CD4-positive, alpha-beta T cell (primary cell): ENCODE measurements at regions of chr14 and their contacts with region 1.

Region 1: DNA sequence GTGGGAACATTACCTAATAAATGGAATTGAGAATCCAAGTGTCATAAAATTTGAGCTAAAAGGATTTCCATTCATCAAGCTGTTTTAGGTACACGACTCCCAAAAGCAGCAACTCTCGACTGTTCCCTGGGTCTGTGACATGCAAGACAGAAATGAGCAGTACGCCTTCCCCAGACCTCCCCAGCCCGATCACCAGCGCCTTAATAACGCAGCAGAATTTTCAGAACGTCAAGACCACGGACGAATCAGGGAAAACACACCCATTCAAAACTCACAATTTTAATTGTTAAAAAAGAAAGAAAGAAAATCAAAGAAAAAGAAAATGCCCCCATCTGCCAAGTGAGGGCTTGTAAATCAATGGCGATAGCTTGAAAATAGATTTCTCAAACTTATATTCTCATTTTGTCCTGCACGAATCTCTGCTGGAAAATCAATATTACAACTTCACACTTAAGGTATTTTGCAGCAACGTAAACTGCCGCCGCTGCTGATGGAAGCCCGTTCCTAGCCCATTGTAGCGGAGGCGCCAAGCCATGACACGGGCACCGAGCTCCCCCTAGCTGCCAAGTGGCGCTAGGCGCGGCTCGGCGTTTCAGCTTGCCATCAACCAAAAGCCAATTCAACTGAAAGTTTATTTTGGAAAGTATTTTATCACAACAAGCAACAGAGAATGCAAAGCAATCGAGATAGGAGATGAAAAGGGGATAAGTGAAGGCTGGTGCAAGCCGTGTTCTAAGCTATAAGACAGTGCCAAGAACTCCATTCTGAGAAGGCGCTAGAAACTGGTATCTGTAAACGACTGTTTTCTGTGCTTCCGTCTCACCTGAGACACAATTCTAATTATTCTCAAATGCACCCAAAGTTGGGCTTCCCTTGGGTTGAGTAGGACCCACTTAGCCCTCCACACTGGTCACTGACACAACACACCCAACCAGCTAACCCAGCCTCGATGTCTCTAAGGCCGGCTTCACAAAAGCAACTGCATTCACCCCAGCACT is 5.5 kb downstream of the BCL11B start:
- DNase-seq: peak; percentile 83 to 94 (median 90)
- ATAC-seq: peak; percentile 22
- H3K4me3 ChIP-seq: peak overlapping the region; percentile 97
- H3K4me3 Mint-ChIP-seq: peak overlapping the region; percentile 100
- H3K27ac ChIP-seq: peak overlapping the region; percentile 95 to 97
- H3K27ac Mint-ChIP-seq: peak overlapping the region; percentile 99
- H3K4me1 ChIP-seq: peaks cover 53% of the 10 kb centered on the region
- H3K4me1 Mint-ChIP-seq: peaks cover 63% of the 10 kb centered on the region
- H3K27me3 ChIP-seq: no peaks in the 10 kb centered on the region
- H3K27me3 Mint-ChIP-seq: peaks cover 5% of the 10 kb centered on the region
- CTCF ChIP-seq: peak; percentile 99

Region 2: DNA sequence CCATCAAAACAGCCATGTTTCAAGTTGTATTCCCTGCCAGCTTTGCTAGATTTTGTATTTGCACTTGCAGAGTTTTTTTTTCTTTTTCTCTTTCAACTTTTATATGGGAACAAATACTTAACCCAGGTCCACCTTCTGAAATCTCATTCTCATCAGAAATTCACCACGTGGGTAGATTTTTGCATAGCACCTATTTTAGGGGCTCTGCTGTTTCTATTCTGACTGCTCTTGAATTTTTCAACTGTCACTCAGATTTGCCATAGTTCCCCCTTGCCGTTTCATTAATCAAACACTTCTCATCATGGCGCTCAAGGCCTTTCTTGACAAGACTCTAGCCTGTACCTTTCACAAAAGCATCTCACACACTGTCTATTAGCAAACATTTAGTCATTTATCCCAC is 1702.1 kb before region 1 on chr14:
- CTCF ChIA-PET with region 1: no interaction called
- POLR2A ChIA-PET with region 1: no interaction called
- intact Hi-C with region 1: no loop called
- DNase-seq: no peak
- ATAC-seq: no peak
- H3K4me3 ChIP-seq: no peak overlapping the region
- H3K4me3 Mint-ChIP-seq: no peak overlapping the region
- H3K27ac ChIP-seq: no peak overlapping the region
- H3K27ac Mint-ChIP-seq: no peak overlapping the region
- H3K4me1 ChIP-seq: no peaks in the 10 kb centered on the region
- H3K4me1 Mint-ChIP-seq: no peaks in the 10 kb centered on the region
- H3K27me3 ChIP-seq: no peaks in the 10 kb centered on the region
- H3K27me3 Mint-ChIP-seq: no peaks in the 10 kb centered on the region
- CTCF ChIP-seq: no peak

Region 3: GRCh38 chr14:97978341-97978740 is 1288.1 kb before region 1 on chr14:
- CTCF ChIA-PET with region 1: interaction called, 26 read pairs
- POLR2A ChIA-PET with region 1: interaction called, 70 read pairs
- intact Hi-C with region 1: loop called in 1 of 2 experiments (anchors 2 kb)
- DNase-seq: peak; percentile 59 to 89 (median 76)
- ATAC-seq: peak; percentile 72
- H3K4me3 ChIP-seq: peak overlapping the region; percentile 76
- H3K4me3 Mint-ChIP-seq: peak overlapping the region; percentile 89
- H3K27ac ChIP-seq: peak overlapping the region; percentile 74 to 82
- H3K27ac Mint-ChIP-seq: peak overlapping the region; percentile 94
- H3K4me1 ChIP-seq: peaks cover 48% of the 10 kb centered on the region
- H3K4me1 Mint-ChIP-seq: peaks cover 84% of the 10 kb centered on the region
- H3K27me3 ChIP-seq: no peaks in the 10 kb centered on the region
- H3K27me3 Mint-ChIP-seq: no peaks in the 10 kb centered on the region
- CTCF ChIP-seq: peak; percentile 69

Region 4: GRCh38 chr14:98189062-98189461 is 1077.4 kb before region 1 on chr14:
- CTCF ChIA-PET with region 1: interaction called, 3 read pairs
- POLR2A ChIA-PET with region 1: interaction called, 271 read pairs
- intact Hi-C with region 1: loop called in 1 of 2 experiments (anchors 5 kb)
- DNase-seq: peak in 5 of 14 experiments; percentile 51 to 85 (median 55)
- ATAC-seq: peak; percentile 31
- H3K4me3 ChIP-seq: peak overlapping the region; percentile 24
- H3K4me3 Mint-ChIP-seq: peak overlapping the region; percentile 80
- H3K27ac ChIP-seq: peak overlapping the region; percentile 76 to 87
- H3K27ac Mint-ChIP-seq: peak overlapping the region; percentile 93
- H3K4me1 ChIP-seq: peaks cover 92% of the 10 kb centered on the region
- H3K4me1 Mint-ChIP-seq: peaks cover 100% of the 10 kb centered on the region
- H3K27me3 ChIP-seq: no peaks in the 10 kb centered on the region
- H3K27me3 Mint-ChIP-seq: no peaks in the 10 kb centered on the region
- CTCF ChIP-seq: no peak

Region 5: DNA sequence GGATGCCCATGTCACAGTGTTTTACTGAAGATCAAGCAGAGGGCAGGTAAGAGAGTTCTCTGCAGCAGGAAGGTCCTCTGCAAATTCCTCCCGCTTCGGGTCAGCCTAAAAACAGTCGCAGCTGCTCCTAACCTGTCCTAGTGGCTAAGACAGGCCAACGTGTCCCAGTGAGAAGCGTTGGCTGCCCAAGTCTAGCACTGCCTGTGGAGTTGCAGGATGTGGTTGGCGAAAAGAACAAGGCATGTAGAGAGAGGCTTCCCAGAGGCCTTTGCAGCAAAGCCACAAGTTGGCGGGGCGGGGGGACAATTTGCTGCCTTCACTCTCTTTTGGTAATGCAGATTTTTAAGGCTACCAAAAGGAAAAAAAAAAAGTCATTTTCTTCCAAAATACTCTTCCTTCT is 334.6 kb before region 1 on chr14:
- CTCF ChIA-PET with region 1: interaction called, 4 read pairs
- POLR2A ChIA-PET with region 1: interaction called, 5 read pairs
- intact Hi-C with region 1: loop called (anchors 5 kb)
- DNase-seq: peak; percentile 56 to 93 (median 79)
- ATAC-seq: peak; percentile 95
- H3K4me3 ChIP-seq: peak overlapping the region; percentile 36
- H3K4me3 Mint-ChIP-seq: peak overlapping the region; percentile 67
- H3K27ac ChIP-seq: peak overlapping the region; percentile 50 to 52
- H3K27ac Mint-ChIP-seq: peak overlapping the region; percentile 87
- H3K4me1 ChIP-seq: peaks cover 80% of the 10 kb centered on the region
- H3K4me1 Mint-ChIP-seq: peaks cover 98% of the 10 kb centered on the region
- H3K27me3 ChIP-seq: no peaks in the 10 kb centered on the region
- H3K27me3 Mint-ChIP-seq: no peaks in the 10 kb centered on the region
- CTCF ChIP-seq: no peak

Region 6: DNA sequence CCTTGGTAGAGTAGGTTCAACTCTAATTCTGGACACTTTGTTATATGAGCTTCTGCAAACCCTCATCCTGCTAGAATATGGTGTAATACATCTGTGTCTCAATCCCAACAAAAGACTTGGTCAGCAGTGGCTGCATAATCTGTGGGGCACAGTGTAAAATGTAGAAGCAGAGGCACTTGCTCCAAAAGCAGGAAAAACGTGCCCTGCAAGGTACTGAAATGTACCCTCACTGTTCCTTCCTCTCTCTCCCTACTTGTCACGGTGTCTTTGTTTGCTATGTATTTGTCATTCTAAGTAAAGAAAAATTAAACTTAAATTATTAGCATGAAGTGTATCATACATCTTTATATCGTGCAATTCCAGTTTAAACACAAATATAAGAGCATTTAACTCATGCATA is 262.3 kb before region 1 on chr14:
- CTCF ChIA-PET with region 1: no interaction called
- POLR2A ChIA-PET with region 1: no interaction called
- intact Hi-C with region 1: no loop called
- DNase-seq: no peak
- ATAC-seq: no peak
- H3K4me3 ChIP-seq: no peak overlapping the region
- H3K4me3 Mint-ChIP-seq: no peak overlapping the region
- H3K27ac ChIP-seq: no peak overlapping the region
- H3K27ac Mint-ChIP-seq: no peak overlapping the region
- H3K4me1 ChIP-seq: no peaks in the 10 kb centered on the region
- H3K4me1 Mint-ChIP-seq: no peaks in the 10 kb centered on the region
- H3K27me3 ChIP-seq: no peaks in the 10 kb centered on the region
- H3K27me3 Mint-ChIP-seq: no peaks in the 10 kb centered on the region
- CTCF ChIP-seq: no peak

Region 7: GRCh38 chr14:99215277-99215676 is 51.2 kb before region 1 on chr14:
- CTCF ChIA-PET with region 1: interaction called, 23 read pairs
- POLR2A ChIA-PET with region 1: interaction called, 4,389 read pairs
- intact Hi-C with region 1: no loop called
- DNase-seq: no peak
- ATAC-seq: no peak
- H3K4me3 ChIP-seq: peak overlapping the region; percentile 39
- H3K4me3 Mint-ChIP-seq: peak overlapping the region; percentile 84
- H3K27ac ChIP-seq: peak overlapping the region; percentile 25 to 71
- H3K27ac Mint-ChIP-seq: peak overlapping the region; percentile 95
- H3K4me1 ChIP-seq: peaks cover 99% of the 10 kb centered on the region
- H3K4me1 Mint-ChIP-seq: peaks cover 99% of the 10 kb centered on the region
- H3K27me3 ChIP-seq: no peaks in the 10 kb centered on the region
- H3K27me3 Mint-ChIP-seq: no peaks in the 10 kb centered on the region
- CTCF ChIP-seq: no peak

Region 8: GRCh38 chr14:99252940-99253868 is 13.3 kb before region 1 on chr14:
- CTCF ChIA-PET with region 1: interaction called, 37 read pairs
- POLR2A ChIA-PET with region 1: interaction called, 4,389 read pairs
- intact Hi-C with region 1: no loop called
- DNase-seq: peak in 11 of 14 experiments; percentile 55 to 87 (median 71)
- ATAC-seq: peak; percentile 48
- H3K4me3 ChIP-seq: peak overlapping the region; percentile 33
- H3K4me3 Mint-ChIP-seq: peak overlapping the region; percentile 83
- H3K27ac ChIP-seq: peak overlapping the region; percentile 95 to 97
- H3K27ac Mint-ChIP-seq: peak overlapping the region; percentile 99
- H3K4me1 ChIP-seq: peaks cover 100% of the 10 kb centered on the region
- H3K4me1 Mint-ChIP-seq: peaks cover 97% of the 10 kb centered on the region
- H3K27me3 ChIP-seq: no peaks in the 10 kb centered on the region
- H3K27me3 Mint-ChIP-seq: no peaks in the 10 kb centered on the region
- CTCF ChIP-seq: no peak

Region 9: DNA sequence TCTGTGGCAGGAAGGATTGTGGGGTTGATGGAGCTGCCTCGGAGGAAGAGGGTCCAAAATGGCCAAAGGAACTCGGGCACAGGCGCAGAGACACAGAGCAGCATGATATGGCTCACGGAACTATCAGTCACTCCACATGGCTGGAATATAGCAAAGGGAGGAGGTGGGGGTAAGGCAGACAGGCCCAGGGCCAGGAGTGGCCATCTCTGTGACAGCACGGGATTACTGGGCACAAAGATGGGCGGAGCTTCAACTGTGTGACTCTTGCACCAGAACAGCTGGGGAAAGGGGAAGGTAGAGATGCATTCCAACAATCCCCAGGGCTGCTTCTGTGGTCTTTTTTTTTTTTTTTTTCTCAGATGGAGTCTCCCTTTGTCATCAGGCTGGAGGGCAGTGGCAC is 501.9 kb after region 1 on chr14:
- CTCF ChIA-PET with region 1: no interaction called
- POLR2A ChIA-PET with region 1: no interaction called
- intact Hi-C with region 1: no loop called
- DNase-seq: no peak
- ATAC-seq: no peak
- H3K4me3 ChIP-seq: no peak overlapping the region
- H3K4me3 Mint-ChIP-seq: no peak overlapping the region
- H3K27ac ChIP-seq: no peak overlapping the region
- H3K27ac Mint-ChIP-seq: no peak overlapping the region
- H3K4me1 ChIP-seq: no peaks in the 10 kb centered on the region
- H3K4me1 Mint-ChIP-seq: no peaks in the 10 kb centered on the region
- H3K27me3 ChIP-seq: no peaks in the 10 kb centered on the region
- H3K27me3 Mint-ChIP-seq: peaks cover 28% of the 10 kb centered on the region
- CTCF ChIP-seq: no peak